ENCODE measurements at regions of chr10 and their contacts with region 1.

Region 1: DNA sequence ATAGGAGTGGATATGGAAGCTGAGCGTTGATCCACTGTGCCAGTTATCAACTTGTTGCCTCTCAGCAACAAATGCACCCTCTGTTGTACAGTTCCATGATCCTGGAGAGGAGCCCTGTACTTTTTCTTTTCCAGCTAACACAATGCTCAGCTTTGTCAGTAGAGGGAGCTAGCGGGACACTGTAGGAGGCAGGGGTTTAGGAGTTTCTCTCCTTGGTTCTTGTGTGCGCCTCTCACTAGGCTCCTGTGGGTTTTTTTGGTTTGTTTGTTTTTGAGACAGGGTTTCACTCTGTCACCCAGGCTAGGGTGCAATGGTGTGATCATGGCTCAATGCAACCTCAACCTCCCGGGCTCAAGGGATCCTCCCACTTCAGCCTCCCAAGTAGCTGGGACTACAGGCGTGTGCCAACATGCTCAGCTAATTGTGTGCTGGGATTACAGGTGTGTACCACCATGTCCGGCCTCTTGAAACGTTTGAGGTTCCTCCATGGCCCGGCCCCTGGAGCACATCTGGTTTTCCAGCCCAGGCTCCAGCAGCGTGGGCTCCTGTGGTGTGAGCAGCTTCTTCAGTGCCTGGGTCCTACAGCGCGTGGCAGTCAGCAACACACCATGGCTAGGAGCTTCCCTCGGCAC is 12.0 kb upstream of the MARVELD1 start:
- DNase-seq: peak; percentile 44
- ATAC-seq: peak; percentile 96
- H3K4me3 Mint-ChIP-seq: no peak overlapping the region
- H3K27ac Mint-ChIP-seq: no peak overlapping the region
- H3K4me1 Mint-ChIP-seq: peaks cover 7% of the 10 kb centered on the region
- H3K27me3 Mint-ChIP-seq: peaks cover 10% of the 10 kb centered on the region
- CTCF ChIP-seq: peak; percentile 64; the same call in 1 of the 2 replicates

Region 2: GRCh38 chr10:97676770-97677581 is 24.6 kb before region 1 on chr10:
- CTCF ChIA-PET with region 1: interaction called, 37 read pairs
- POLR2A ChIA-PET with region 1: interaction called, 4 read pairs
- DNase-seq: peak; percentile 48
- ATAC-seq: peak; percentile 93
- H3K4me3 Mint-ChIP-seq: no peak overlapping the region
- H3K27ac Mint-ChIP-seq: no peak overlapping the region
- H3K4me1 Mint-ChIP-seq: no peaks in the 10 kb centered on the region
- H3K27me3 Mint-ChIP-seq: no peaks in the 10 kb centered on the region
- CTCF ChIP-seq: peak; percentile 87

Region 3: DNA sequence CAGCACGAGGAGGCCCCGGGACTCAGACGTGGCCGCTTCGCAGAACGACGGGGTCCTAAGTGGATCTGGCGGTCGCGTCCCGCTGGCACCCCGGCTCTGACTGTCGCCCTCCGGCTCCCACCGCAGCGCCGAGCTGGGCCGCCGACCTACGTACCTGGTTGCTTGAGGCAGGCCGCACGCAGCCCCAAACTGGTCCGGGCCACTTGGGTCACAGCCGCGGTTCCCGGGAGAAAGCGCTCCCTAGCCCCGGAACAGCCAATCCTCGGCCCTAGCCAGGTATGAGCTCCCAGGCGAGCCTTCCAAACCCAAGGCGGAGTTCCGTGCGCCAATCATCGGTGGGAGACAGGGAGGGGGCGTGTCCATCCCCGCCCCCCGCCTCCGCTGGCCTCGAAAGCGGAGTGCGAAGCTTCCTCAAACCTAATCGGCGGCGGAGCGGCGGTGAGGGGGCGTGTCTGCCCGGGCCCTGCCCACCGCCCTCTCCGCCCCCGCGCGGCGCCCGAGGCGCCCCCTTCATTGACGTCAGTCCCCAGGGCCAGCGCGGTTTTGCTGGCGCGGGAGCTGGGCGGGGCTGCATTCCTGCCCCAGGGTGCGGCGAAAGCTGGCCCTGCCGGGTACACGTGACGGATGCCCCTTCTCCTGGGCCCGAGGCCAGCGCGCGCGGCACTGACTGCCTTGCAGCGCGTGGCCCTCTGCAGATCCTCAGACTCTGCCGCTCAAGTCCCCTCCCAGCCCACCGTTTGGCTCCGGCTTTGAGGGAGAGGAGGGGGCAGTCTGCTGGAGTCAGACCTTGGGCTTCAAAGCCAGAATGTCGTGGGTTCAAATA is 14.4 kb before region 1 on chr10 and contains the start of gene AVPI1:
- CTCF ChIA-PET with region 1: interaction called, 56 read pairs
- POLR2A ChIA-PET with region 1: interaction called, 12 read pairs
- DNase-seq: peak; percentile 98
- ATAC-seq: peak; percentile 91
- H3K4me3 Mint-ChIP-seq: peak within 1 kb of the TSS; percentile 86
- H3K27ac Mint-ChIP-seq: peak within 1 kb of the TSS; percentile 92
- H3K4me1 Mint-ChIP-seq: peaks cover 32% of the 10 kb centered on the region
- H3K27me3 Mint-ChIP-seq: peaks cover 17% of the 10 kb centered on the region
- CTCF ChIP-seq: no peak
- total RNA-seq, gene AVPI1: 8.1 to 9.8 TPM (median 9.0 TPM) in 3 replicates

Region 4: GRCh38 chr10:97724341-97724941 is 22.9 kb after region 1 on chr10:
- CTCF ChIA-PET with region 1: interaction called, 58 read pairs
- POLR2A ChIA-PET with region 1: no interaction called
- DNase-seq: no peak
- ATAC-seq: no peak
- H3K4me3 Mint-ChIP-seq: no peak overlapping the region
- H3K27ac Mint-ChIP-seq: no peak overlapping the region
- H3K4me1 Mint-ChIP-seq: peaks cover 15% of the 10 kb centered on the region
- H3K27me3 Mint-ChIP-seq: no peaks in the 10 kb centered on the region; the same call in 1 of the 2 replicates
- CTCF ChIP-seq: no peak

Region 5: DNA sequence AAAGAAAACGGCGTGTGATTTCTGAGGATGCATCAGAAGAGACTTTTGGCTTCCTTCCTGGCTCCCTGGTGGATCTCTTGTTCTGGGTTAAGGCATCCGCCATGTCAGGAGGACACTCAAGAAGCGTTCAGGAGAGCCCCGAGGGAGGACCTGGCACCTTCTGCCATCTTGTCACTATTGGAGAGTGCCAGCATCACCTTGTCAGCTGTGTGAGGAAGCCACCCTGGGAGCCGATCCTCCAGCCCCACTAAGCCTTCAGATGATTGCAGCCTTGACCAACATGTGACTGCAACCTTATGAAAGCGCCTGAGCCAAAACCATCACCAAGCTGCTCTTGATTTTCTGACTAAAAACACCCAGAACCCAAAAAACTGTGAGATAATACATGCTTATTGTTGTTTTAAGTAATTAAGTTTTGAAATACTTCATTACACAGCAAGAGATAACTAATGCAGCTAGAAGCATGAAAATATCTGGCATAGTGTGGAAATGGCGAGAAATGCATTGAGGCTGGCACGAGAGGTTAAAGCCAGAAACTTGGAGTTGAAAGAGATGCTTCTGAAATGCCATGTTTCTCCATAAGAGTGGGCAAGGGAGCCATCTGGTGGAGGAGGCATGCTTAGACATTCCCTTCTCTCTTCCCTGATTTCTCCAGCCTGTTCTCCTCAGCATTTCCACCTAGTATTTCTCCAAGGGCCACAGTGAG is 29.9 kb after region 1 on chr10:
- CTCF ChIA-PET with region 1: interaction called, 58 read pairs
- POLR2A ChIA-PET with region 1: interaction called, 4 read pairs
- DNase-seq: peak; percentile 71
- ATAC-seq: peak; percentile 88
- H3K4me3 Mint-ChIP-seq: no peak overlapping the region
- H3K27ac Mint-ChIP-seq: no peak overlapping the region
- H3K4me1 Mint-ChIP-seq: peaks cover 5% of the 10 kb centered on the region
- H3K27me3 Mint-ChIP-seq: peaks cover 33% of the 10 kb centered on the region
- CTCF ChIP-seq: peak; percentile 56

Region 6: DNA sequence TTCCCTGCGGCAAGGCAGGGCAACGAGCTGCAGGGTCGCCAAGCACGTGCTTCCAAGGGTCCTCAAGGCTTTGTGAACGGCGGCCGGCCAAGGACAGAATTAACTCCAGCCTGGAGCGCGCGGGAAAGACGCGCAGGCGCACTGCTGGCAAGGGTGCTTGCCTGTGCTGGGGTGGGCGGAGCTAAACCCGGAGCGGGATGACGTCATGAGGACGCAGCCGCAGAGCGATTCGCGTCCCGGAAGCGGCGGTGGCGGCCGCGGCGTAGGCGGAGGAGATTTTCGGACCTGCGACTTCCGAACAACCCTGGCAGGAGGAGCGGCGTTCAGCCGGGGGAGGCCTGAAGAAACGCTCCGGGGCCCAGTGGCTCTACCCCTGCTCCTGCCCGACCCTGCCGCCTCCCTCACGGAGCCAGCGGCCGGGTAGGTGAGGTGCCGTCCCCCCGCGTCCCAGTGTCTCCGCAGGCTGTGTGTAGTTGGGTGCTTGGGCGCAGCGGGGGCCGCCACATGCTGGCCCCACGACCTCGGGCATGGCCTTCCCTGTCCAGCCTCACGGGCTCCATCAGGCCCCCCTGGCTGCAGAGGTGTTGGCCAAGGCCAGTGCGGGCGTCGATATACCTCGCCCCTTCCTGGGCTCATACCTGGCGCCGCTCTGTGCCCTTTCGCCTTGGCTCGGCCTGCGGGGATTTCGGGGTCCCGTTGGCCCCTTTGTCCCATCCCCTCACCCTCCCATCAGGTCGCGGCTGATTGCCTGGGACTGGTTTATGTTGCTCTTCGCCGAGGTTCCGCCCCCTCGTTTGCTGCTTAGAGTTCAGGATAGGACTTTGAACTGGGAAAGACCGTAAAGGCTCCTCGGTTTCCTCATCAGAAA is 35.6 kb after region 1 on chr10 and contains the start of gene ZFYVE27:
- CTCF ChIA-PET with region 1: interaction called, 56 read pairs
- POLR2A ChIA-PET with region 1: interaction called, 4 read pairs
- DNase-seq: peak; percentile 98
- ATAC-seq: peak; percentile 92
- H3K4me3 Mint-ChIP-seq: peak within 1 kb of the TSS; percentile 87
- H3K27ac Mint-ChIP-seq: peak within 1 kb of the TSS; percentile 90
- H3K4me1 Mint-ChIP-seq: peaks cover 10% of the 10 kb centered on the region
- H3K27me3 Mint-ChIP-seq: peaks cover 34% of the 10 kb centered on the region
- CTCF ChIP-seq: no peak
- total RNA-seq, gene ZFYVE27: 23.2 to 26.9 TPM (median 26.0 TPM) in 3 replicates

Region 7: GRCh38 chr10:97759158-97759887 is 57.8 kb after region 1 on chr10:
- CTCF ChIA-PET with region 1: interaction called, 11 read pairs
- POLR2A ChIA-PET with region 1: no interaction called
- DNase-seq: peak; percentile 90
- ATAC-seq: peak; percentile 90
- H3K4me3 Mint-ChIP-seq: no peak overlapping the region
- H3K27ac Mint-ChIP-seq: peak overlapping the region; percentile 53; the same call in 1 of the 2 replicates
- H3K4me1 Mint-ChIP-seq: peaks cover 14% of the 10 kb centered on the region
- H3K27me3 Mint-ChIP-seq: no peaks in the 10 kb centered on the region
- CTCF ChIP-seq: peak; percentile 76

Measured in WTC11 (cell line).